GM18951 (cell line): ENCODE measurements at regions of chr11 and their contacts with region 1.

Region 1: GRCh38 chr11:120500414-120501071 is 11.0 kb upstream of the GRIK4 start:
- POLR2A ChIP-seq: no peak

Region 2: DNA sequence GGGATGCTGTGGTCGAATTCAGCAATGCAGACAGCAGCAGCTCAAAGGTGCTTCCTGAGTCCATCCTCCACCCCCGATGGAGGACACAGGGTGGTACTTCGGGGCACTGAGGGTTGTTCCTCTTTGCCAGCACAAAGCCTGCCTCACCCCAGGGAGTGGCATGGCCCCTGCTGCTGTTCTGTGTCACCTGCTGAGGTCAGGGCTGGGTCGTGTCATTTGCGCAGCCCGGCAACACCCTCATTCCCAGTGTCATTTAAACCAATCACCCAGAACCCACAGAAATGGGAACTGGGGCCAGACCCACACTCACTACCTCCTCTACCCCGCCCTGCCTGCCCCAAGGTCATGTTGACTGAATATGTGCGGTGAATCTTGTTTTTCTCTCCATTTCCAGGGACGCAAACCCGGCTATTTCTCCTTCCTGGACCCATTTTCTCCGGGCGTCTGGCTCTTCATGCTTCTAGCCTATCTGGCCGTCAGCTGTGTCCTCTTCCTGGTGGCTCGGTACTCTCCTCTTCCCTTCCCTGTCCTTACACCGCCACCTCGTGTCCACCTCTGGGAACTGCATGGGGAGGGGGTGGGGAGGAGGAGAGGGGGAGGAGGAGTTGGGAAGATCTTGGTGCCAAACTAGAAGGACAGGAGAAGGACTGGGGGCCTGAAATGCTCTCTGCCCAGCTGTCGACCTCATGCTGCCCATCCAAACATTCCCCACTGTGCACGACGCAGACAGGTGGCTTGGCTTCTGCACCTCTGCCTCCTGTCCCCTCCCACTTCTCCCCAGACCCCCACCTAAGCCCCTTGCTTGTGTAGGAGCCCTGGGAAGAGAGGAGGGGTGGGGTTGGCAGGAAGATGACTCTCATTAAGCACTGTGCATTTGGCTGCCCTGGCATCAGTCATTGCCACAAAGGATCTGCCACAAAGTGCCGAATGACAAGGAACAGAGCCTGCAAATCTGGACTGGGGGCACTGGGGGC is 452.2 kb after region 1 on chr11:
- in situ Hi-C with region 1: loop called (anchors 10 kb)
- POLR2A ChIP-seq: no peak